CD14-positive monocyte (primary cell): ENCODE measurements at regions of chr18 and their contacts with region 1.

Region 1: GRCh38 chr18:9334329-9334972 is at the start of gene TWSG1:
- DNase-seq: peak; percentile 78 to 84 (median 80)
- H3K4me3 ChIP-seq: peak within 1 kb of the TSS; percentile 80 to 87 (median 85)
- H3K4me3 Mint-ChIP-seq: peak within 1 kb of the TSS; percentile 92 to 93
- H3K27ac ChIP-seq: peak within 1 kb of the TSS; percentile 48 to 59
- H3K27ac Mint-ChIP-seq: peak within 1 kb of the TSS; percentile 63 to 88 (median 81)
- H3K4me1 ChIP-seq: peaks cover 14 to 31% of the 10 kb centered on the region in 2 donors
- H3K4me1 Mint-ChIP-seq: peaks cover 27% of the 10 kb centered on the region
- H3K27me3 ChIP-seq: peaks cover 0 to 14% of the 10 kb centered on the region in 2 donors
- H3K27me3 Mint-ChIP-seq: peaks cover 5 to 8% (median 8%) of the 10 kb centered on the region in 3 donors
- CTCF ChIP-seq: peak; percentile 50
- polyA plus RNA-seq, gene TWSG1: 1.6 to 5.5 (median 3.9) TPM

Region 2: GRCh38 chr18:9474983-9475642 is 140.7 kb after region 1 on chr18 and contains the start of gene RALBP1:
- intact Hi-C with region 1: loop called (anchors 5 kb)
- DNase-seq: peak; percentile 99
- H3K4me3 ChIP-seq: peak within 1 kb of the TSS; percentile 79 to 89 (median 80)
- H3K4me3 Mint-ChIP-seq: peak within 1 kb of the TSS; percentile 88 to 92
- H3K27ac ChIP-seq: peak within 1 kb of the TSS; percentile 84 to 90
- H3K27ac Mint-ChIP-seq: peak within 1 kb of the TSS; percentile 81 to 94 (median 91)
- H3K4me1 ChIP-seq: peaks cover 20 to 25% of the 10 kb centered on the region in 2 donors
- H3K4me1 Mint-ChIP-seq: peaks cover 30% of the 10 kb centered on the region
- H3K27me3 ChIP-seq: no peaks in the 10 kb centered on the region
- H3K27me3 Mint-ChIP-seq: peaks cover 0 to 2% (median 0%) of the 10 kb centered on the region in 3 donors
- CTCF ChIP-seq: no peak
- polyA plus RNA-seq, gene RALBP1: 21.5 to 36.0 (median 32.8) TPM

Region 3: DNA sequence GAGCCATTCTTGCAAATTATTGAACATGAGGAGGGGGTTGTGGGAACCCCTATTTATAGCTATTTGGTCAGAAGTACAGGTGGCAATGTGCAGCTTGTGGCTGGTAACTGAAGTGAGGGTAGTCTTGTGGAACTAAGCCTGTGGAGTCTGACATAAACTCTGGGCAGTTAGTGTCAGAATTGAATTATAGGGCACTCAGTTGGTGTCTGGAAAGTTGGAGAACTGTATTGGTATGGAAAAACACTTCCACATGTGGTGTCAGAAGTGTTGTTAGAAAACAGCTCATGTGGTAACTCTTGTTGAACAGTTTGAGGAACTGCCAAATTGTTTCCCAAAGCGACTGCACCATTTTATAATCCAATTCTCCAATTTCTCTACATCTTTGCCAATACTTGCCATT is 148.3 kb after region 1 on chr18:
- intact Hi-C with region 1: loop called in 1 of 2 experiments (anchors 5 kb)
- DNase-seq: no peak
- H3K4me3 ChIP-seq: no peak overlapping the region
- H3K4me3 Mint-ChIP-seq: no peak overlapping the region
- H3K27ac ChIP-seq: peak overlapping the region in 1 of 2 donors; percentile 64
- H3K27ac Mint-ChIP-seq: peak overlapping the region in 4 of 7 donors; percentile 28 to 74 (median 71)
- H3K4me1 ChIP-seq: peaks cover 11 to 21% of the 10 kb centered on the region in 2 donors
- H3K4me1 Mint-ChIP-seq: peaks cover 34% of the 10 kb centered on the region
- H3K27me3 ChIP-seq: no peaks in the 10 kb centered on the region
- H3K27me3 Mint-ChIP-seq: peaks cover 0 to 3% (median 0%) of the 10 kb centered on the region in 3 donors
- CTCF ChIP-seq: no peak